AG04450 (cell line): ENCODE measurements at regions of chr12 and their contacts with region 1.

Region 1: GRCh38 chr12:99386907-99387306 is 260.6 kb upstream of the GARIN6 start:
- DNase-seq: peak; percentile 1
- H3K4me3 ChIP-seq: no peak overlapping the region
- H3K27ac ChIP-seq: no peak overlapping the region
- H3K27me3 ChIP-seq: no peaks in the 10 kb centered on the region
- CTCF ChIP-seq: peak; percentile 51

Region 2: GRCh38 chr12:99200711-99201384 is 186.1 kb before region 1 on chr12:
- CTCF ChIA-PET with region 1: no interaction called
- POLR2A ChIA-PET with region 1: no interaction called
- DNase-seq: no peak
- H3K4me3 ChIP-seq: no peak overlapping the region
- H3K27ac ChIP-seq: no peak overlapping the region
- H3K27me3 ChIP-seq: no peaks in the 10 kb centered on the region
- CTCF ChIP-seq: no peak

Region 3: DNA sequence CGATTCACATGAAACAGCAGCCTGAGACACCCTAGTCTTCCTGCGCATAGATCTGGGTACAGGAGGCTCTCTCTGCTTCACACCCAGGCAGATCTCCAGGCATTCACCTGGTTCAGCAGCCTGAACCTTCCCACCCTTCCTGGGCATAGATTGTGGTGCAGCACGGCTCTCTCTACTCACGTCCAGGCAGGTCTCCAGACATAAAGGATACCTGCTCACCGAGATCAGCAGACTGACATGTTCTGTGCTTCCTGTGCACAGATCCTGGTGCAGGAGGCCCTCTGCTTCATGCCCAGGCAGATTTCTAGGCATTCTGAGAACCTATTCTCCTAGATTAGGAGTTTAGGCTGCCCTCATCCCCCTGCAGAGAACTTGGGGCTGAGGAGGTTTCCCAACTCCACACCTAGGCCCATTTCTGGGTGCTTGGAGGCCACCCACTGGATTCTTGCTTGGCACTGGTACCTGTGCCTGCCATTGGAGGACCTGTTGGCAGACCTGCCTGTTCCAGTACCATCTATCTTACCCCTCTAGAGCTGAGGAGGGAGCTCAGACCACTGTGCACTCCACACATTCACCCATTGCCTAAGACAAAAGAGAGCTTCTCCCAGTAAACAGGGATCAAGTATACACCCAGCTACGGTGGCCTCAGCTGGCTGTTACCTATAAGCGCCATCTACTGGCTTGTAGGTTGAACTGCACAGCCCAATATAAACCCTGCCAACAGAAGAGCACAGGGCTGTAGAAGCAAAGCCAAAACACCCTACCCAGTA is 232.7 kb after region 1 on chr12:
- CTCF ChIA-PET with region 1: interaction called, 12 read pairs
- POLR2A ChIA-PET with region 1: no interaction called
- DNase-seq: peak; percentile 6
- H3K4me3 ChIP-seq: no peak overlapping the region
- H3K27ac ChIP-seq: no peak overlapping the region
- H3K27me3 ChIP-seq: no peaks in the 10 kb centered on the region
- CTCF ChIP-seq: peak; percentile 72